Heart right ventricle (tissue), 16 donors: ENCODE measurements at regions of chr15 and their contacts with region 1.

Region 1: DNA sequence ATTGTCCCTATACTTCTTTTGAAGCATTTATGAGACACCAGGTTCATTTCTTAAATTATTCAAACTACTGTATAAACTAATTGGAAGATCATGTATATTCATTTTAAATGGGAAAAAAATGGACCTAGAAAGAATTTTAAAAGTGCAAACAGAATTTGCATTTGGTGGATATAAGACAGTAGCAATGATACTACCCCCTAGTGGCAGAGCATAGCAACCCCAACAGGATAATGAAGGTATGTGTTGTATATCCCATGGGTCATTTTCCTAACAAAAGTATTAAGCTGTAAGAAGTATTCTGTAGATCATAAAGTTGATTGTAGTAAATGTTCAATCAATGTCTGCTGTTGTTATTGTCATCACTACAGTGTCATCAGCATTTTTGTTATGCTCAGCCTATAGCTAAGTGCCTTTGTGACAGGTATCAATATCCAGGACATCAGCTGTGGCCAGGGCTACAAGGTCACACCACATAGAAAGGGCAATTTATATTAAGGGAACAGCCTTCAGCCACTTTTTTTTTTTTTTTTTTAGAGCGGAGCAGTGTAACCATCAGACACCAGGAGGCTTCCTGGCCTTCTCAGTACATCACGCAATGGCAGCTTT is 175.8 kb downstream of the FOXB1 start:
- DNase-seq: no peak
- ATAC-seq: no peak
- H3K4me3 ChIP-seq: no peak overlapping the region
- H3K27ac ChIP-seq: no peak overlapping the region
- H3K4me1 ChIP-seq: no peaks in the 10 kb centered on the region
- H3K27me3 ChIP-seq: peaks cover 0 to 36% (median 12%) of the 10 kb centered on the region in 7 donors
- CTCF ChIP-seq: peak; percentile 47 to 91 (median 78)

Region 2: GRCh38 chr15:59688841-59689625 is 490.9 kb before region 1 on chr15 and contains the start of gene BNIP2:
- intact Hi-C with region 1: loop called in 1 of 10 experiments (anchors 10 kb)
- DNase-seq: peak; percentile 99 to 100
- ATAC-seq: peak; percentile 97 to 98 (median 98)
- H3K4me3 ChIP-seq: peak within 1 kb of the TSS; percentile 72 to 99 (median 90)
- H3K27ac ChIP-seq: peak within 1 kb of the TSS; percentile 95 to 99 (median 98)
- H3K4me1 ChIP-seq: peaks cover 0 to 56% (median 38%) of the 10 kb centered on the region in 9 donors
- H3K27me3 ChIP-seq: no peaks in the 10 kb centered on the region
- CTCF ChIP-seq: peak in 3 of 9 donors; percentile 10 to 18 (median 15)
- total RNA-seq, gene BNIP2: 65.2 to 96.6 (median 80.2) TPM

Region 3: DNA sequence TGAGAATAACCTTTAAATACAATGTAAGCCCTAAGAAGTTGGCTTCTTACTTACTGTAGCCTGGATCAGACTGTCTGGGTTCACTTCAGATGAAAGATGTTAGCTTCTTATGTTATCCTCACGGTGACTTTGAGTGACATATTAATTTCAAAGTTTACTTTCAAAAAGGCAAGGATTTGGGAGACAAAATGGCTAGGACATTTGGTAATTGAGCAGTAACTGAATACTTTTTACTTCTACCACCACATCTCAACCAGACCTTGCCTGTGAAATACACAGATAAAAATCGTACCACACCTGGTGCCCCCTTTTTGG is 454.8 kb before region 1 on chr15:
- intact Hi-C with region 1: loop called in 5 of 10 experiments (anchors 5 to 10 kb)
- DNase-seq: no peak
- ATAC-seq: no peak
- H3K4me3 ChIP-seq: no peak overlapping the region
- H3K27ac ChIP-seq: no peak overlapping the region
- H3K4me1 ChIP-seq: no peaks in the 10 kb centered on the region
- H3K27me3 ChIP-seq: peaks cover 0 to 31% (median 15%) of the 10 kb centered on the region in 7 donors
- CTCF ChIP-seq: no peak

Region 4: DNA sequence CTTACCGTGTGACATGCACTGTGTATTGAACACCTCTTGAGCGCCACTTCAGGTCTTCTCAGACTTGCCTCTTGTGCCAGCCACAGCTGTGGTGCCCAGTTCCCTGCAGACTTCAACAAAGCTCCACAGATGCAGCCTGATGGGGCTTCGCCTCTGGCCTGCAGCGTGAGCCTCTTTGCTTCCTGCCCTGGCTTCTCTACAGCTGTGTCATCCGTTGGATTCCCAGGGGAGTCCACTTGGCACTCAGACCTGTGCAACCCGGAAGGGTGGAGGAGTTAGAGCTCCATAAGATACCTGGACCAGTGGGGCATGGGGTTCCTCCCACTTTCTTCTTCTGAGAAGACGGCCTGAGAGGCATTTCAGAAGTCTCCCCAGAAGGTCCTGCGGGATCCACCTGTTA is 433.1 kb before region 1 on chr15:
- intact Hi-C with region 1: loop called in 3 of 10 experiments (anchors 5 to 10 kb)
- DNase-seq: no peak
- ATAC-seq: no peak
- H3K4me3 ChIP-seq: no peak overlapping the region
- H3K27ac ChIP-seq: no peak overlapping the region
- H3K4me1 ChIP-seq: no peaks in the 10 kb centered on the region
- H3K27me3 ChIP-seq: peaks cover 0 to 58% (median 37%) of the 10 kb centered on the region in 7 donors
- CTCF ChIP-seq: no peak

Region 5: DNA sequence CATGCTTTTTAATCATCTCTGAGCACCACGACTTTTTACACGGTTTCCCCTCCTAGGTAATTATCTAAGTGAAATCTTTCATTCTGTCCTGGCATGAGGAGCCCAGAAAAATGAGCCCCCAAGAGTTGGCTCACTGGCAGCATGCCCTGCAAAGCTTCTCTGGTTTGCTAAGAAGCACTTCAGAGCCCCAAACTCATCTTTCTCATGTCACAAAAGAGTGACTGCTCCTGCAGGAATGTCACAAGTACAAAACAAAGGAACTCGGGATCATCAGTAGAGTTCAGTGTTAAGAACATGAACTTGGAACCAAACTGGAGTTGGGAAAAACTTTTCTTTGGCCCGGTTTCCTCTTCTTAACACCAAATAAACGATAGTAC is 51.9 kb before region 1 on chr15:
- intact Hi-C with region 1: loop called in 1 of 10 experiments (anchors 10 kb)
- DNase-seq: no peak
- ATAC-seq: peak in 3 of 8 donors; percentile 14 to 35 (median 35)
- H3K4me3 ChIP-seq: peak overlapping the region; percentile 16 to 63 (median 57)
- H3K27ac ChIP-seq: peak overlapping the region in 8 of 10 donors; percentile 15 to 89 (median 64)
- H3K4me1 ChIP-seq: peaks cover 0 to 12% (median 6%) of the 10 kb centered on the region in 9 donors
- H3K27me3 ChIP-seq: peaks cover 0 to 17% (median 0%) of the 10 kb centered on the region in 7 donors
- CTCF ChIP-seq: no peak